AG04450 (cell line): ENCODE measurements at regions of chr2 and their contacts with region 1.

Region 1: DNA sequence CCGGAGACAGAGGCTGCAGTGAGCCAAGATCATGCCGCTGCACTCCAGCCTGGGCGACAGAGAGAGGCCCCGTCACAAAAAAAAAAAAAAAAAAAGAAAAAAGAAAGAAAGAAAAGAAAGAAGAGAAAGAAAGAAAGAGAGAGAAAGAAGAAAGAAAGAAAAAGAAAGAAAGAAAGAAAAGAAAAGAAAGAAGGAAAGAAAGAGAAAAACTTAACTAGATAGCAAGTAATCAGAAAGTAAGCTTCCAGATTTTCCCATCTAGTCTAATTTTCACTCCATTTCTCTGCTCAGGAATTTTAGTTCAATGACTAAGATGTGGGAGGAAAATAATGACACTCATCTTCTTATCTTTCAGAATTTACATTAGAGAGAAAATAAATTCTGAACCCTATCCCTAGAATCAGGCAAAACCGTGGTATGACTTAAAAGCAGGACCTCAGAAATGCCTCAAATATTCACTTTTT is 2.4 kb downstream of the GFPT1 start:
- DNase-seq: no peak
- H3K4me3 ChIP-seq: peak overlapping the region; percentile 33
- H3K27ac ChIP-seq: no peak overlapping the region
- H3K27me3 ChIP-seq: no peaks in the 10 kb centered on the region
- CTCF ChIP-seq: no peak

Region 2: DNA sequence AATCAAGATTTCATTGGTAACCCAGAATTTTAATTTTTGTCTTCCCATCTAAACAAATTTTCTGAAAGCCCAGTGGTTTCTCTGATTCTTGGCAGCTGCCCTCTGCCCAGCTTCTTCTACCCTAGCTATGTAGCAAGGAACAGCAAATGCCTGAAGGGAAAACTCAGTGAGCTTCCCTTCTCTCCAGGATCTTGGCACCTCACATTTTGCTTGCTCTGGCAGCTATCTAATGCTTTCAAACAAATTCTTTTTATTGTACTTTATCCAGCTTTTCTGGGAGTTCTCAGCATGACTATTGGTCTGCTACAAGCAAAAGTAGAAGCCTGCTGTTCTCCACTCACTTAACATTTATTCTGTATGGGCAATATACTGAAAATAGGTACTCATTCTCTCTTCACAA is 20.7 kb after region 1 on chr2:
- CTCF ChIA-PET with region 1: no interaction called
- POLR2A ChIA-PET with region 1: interaction called, 12 read pairs
- DNase-seq: no peak
- H3K4me3 ChIP-seq: no peak overlapping the region
- H3K27ac ChIP-seq: no peak overlapping the region
- H3K27me3 ChIP-seq: no peaks in the 10 kb centered on the region
- CTCF ChIP-seq: no peak